Activated CD4-positive, alpha-beta T cell treated with anti-CD3 and anti-CD28 coated beads, Interleukin-2, amount 10 ng/mL, durations not matched to agents 7 days and 5 days (primary cell): ENCODE measurements at regions of chr5 and their contacts with region 1.

Region 1: GRCh38 chr5:170434966-170435605 is 45.9 kb upstream of the KCNMB1 start:
- DNase-seq: peak; percentile 46
- H3K4me3 Mint-ChIP-seq: no peak overlapping the region
- H3K27ac Mint-ChIP-seq: no peak overlapping the region
- H3K4me1 Mint-ChIP-seq: no peaks in the 10 kb centered on the region
- H3K27me3 Mint-ChIP-seq: peaks cover 3% of the 10 kb centered on the region

Region 2: DNA sequence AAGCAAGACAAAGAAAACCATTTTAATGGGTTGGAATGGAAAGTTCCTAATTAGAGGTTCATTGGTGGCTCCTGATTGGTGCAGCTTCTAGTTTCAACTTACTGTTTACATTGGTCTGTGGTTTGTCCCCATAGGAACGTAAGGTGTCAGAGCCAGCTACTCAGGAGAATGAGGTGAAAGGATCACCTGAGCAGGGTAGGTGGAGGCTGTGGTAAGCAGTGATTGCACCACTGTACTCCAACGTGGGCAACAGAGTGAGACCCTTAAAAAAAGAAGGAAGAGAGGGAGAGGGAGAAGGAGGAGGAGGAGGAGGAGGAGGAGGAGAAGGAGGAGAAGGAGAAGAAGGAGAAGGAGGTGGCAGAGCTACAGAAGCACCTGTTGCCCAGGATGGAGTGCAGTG is 99.1 kb after region 1 on chr5:
- CTCF ChIA-PET with region 1: no interaction called
- POLR2A ChIA-PET with region 1: no interaction called
- DNase-seq: no peak
- H3K4me3 Mint-ChIP-seq: no peak overlapping the region
- H3K27ac Mint-ChIP-seq: no peak overlapping the region
- H3K4me1 Mint-ChIP-seq: no peaks in the 10 kb centered on the region
- H3K27me3 Mint-ChIP-seq: peaks cover 12% of the 10 kb centered on the region

Region 3: DNA sequence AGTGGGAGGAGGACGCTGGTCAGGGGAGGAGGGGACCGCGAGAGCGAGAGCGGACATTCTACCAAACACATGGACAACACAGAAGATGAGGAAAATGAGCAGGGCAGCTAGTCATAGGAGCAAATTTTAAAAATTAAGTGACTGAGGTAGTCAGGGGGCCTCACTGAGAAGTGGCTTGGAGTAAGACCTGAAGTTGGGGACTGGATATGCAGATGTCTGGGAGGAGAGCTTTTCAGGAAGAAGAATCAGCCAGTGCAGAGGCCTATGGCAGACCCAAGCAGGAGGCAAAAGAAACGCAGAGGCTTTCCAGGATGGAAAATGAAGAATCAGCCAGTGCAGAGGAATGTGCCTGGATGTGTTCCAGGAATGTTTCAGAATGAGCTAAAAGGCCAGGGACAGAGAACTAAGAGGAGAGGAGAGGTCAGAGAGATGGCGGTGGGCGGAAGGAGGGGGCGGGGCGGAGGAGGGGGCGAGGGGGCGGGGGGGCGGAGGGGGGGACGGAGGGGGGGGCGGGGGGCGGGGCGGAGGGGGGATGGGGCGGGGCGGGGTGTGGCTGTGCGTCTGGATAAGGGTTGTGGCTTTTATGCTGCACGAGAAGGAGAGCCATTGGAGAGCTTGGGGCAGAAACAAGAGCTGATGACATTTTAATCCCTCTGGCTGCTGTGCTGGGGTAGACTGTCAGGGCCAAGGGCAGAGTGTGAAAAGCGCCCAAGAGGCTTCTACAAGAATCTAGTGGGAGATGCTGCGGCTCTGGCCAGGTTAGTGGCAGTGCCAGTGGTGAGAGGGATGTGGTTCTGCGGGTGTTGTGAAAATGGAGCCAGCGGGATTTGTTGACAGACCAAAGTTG is 198.4 kb after region 1 on chr5:
- CTCF ChIA-PET with region 1: interaction called, 19 read pairs
- POLR2A ChIA-PET with region 1: no interaction called
- DNase-seq: no peak
- H3K4me3 Mint-ChIP-seq: no peak overlapping the region
- H3K27ac Mint-ChIP-seq: no peak overlapping the region
- H3K4me1 Mint-ChIP-seq: peaks cover 14% of the 10 kb centered on the region
- H3K27me3 Mint-ChIP-seq: peaks cover 14% of the 10 kb centered on the region